B cell (primary cell): ENCODE measurements at regions of chr12 and their contacts with region 1.

Region 1: DNA sequence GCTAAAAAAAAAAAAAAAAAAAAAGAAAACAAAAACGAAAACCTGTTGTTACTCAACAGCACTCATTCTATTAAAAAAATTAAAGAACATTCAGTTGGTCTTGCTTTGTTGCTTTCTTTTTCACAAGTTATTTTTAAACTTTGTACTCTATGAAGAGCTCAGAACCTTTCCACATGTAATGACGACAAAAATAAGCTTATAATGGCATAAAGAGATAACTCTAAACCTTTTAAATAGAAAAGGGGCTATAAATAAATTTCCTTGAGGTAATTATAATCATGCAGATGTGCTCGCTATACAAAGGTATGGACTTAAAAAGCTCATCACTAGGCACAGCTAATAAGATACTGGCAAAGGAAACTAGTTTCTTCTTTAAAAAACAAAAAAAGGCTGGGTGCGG is 13.4 kb downstream of the NR2C1 start:
- DNase-seq: no peak
- ATAC-seq: no peak
- H3K4me3 ChIP-seq: no peak overlapping the region
- H3K4me3 Mint-ChIP-seq: no peak overlapping the region
- H3K27ac ChIP-seq: no peak overlapping the region
- H3K27ac Mint-ChIP-seq: no peak overlapping the region
- H3K4me1 ChIP-seq: no peaks in the 10 kb centered on the region
- H3K4me1 Mint-ChIP-seq: no peaks in the 10 kb centered on the region
- H3K27me3 ChIP-seq: no peaks in the 10 kb centered on the region
- H3K27me3 Mint-ChIP-seq: no peaks in the 10 kb centered on the region
- CTCF ChIP-seq: no peak

Region 2: GRCh38 chr12:95312656-95313055 is 252.7 kb after region 1 on chr12:
- CTCF ChIA-PET with region 1: no interaction called
- POLR2A ChIA-PET with region 1: interaction called, 12 read pairs
- intact Hi-C with region 1: no loop called
- DNase-seq: no peak
- ATAC-seq: no peak
- H3K4me3 ChIP-seq: no peak overlapping the region
- H3K4me3 Mint-ChIP-seq: no peak overlapping the region
- H3K27ac ChIP-seq: no peak overlapping the region
- H3K27ac Mint-ChIP-seq: no peak overlapping the region
- H3K4me1 ChIP-seq: no peaks in the 10 kb centered on the region
- H3K4me1 Mint-ChIP-seq: no peaks in the 10 kb centered on the region
- H3K27me3 ChIP-seq: no peaks in the 10 kb centered on the region
- H3K27me3 Mint-ChIP-seq: peaks cover 3% of the 10 kb centered on the region
- CTCF ChIP-seq: no peak